Activated CD4-positive, alpha-beta memory T cell treated with anti-CD3 and anti-CD28 coated beads for 36 hours (primary cell): ENCODE measurements at regions of chr5 and their contacts with region 1.

Region 1: GRCh38 chr5:79560771-79561524 is 47.0 kb upstream of the HOMER1 start:
- DNase-seq: peak; percentile 51
- H3K4me3 Mint-ChIP-seq: peak overlapping the region; percentile 30
- H3K27ac Mint-ChIP-seq: peak overlapping the region; percentile 99
- H3K4me1 Mint-ChIP-seq: peaks cover 42% of the 10 kb centered on the region
- H3K27me3 Mint-ChIP-seq: peaks cover 1% of the 10 kb centered on the region

Region 2: DNA sequence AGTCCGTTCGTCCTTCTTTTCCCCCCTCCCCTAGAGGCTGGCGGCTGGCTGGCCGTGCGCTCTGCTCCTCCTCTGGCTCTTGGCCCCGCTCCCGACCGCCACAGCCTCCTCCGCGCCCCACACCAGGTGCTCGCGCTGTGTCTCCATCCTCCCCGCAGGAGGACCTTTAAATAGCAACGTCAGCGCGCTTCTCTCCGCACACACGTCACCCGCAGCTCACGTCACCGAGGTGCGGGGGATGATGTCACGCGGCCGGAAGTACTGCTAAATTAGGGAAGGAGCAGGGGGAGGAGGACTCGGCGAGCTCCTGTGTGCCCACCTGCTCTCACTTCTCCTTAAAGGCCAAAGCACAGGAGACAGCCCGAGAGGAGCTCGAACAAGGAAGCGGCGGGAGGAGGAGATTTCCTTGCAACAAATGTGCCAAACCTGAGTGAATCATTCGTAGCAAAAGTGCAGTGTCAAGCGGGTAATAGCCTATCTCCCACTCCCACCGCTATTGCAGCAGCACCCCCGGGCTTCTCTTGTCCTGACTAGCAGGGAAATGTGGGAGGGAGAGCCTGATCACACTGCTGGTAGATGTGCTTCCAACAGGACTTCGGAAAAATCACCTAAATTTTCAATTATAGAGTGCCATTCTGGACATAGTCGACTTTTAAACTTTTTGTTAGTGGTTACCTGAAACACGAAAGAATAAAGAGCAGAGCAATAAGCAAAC is 46.4 kb before region 1 on chr5:
- CTCF ChIA-PET with region 1: no interaction called
- POLR2A ChIA-PET with region 1: interaction called, 3 read pairs
- intact Hi-C with region 1: loop called (anchors 1 kb)
- DNase-seq: peak; percentile 93
- H3K4me3 Mint-ChIP-seq: peak overlapping the region; percentile 92
- H3K27ac Mint-ChIP-seq: peak overlapping the region; percentile 91
- H3K4me1 Mint-ChIP-seq: peaks cover 28% of the 10 kb centered on the region
- H3K27me3 Mint-ChIP-seq: peaks cover 24% of the 10 kb centered on the region

Region 3: GRCh38 chr5:79684782-79685181 is 123.8 kb after region 1 on chr5:
- CTCF ChIA-PET with region 1: no interaction called
- POLR2A ChIA-PET with region 1: no interaction called
- intact Hi-C with region 1: loop called (anchors 5 kb)
- DNase-seq: no peak
- H3K4me3 Mint-ChIP-seq: no peak overlapping the region
- H3K27ac Mint-ChIP-seq: no peak overlapping the region
- H3K4me1 Mint-ChIP-seq: peaks cover 24% of the 10 kb centered on the region
- H3K27me3 Mint-ChIP-seq: no peaks in the 10 kb centered on the region

Region 4: GRCh38 chr5:79845448-79846197 is 284.7 kb after region 1 on chr5:
- CTCF ChIA-PET with region 1: no interaction called
- POLR2A ChIA-PET with region 1: no interaction called
- intact Hi-C with region 1: loop called (anchors 2 kb)
- DNase-seq: peak; percentile 62
- H3K4me3 Mint-ChIP-seq: no peak overlapping the region
- H3K27ac Mint-ChIP-seq: peak overlapping the region; percentile 53
- H3K4me1 Mint-ChIP-seq: peaks cover 14% of the 10 kb centered on the region
- H3K27me3 Mint-ChIP-seq: peaks cover 14% of the 10 kb centered on the region

Region 5: GRCh38 chr5:80034962-80035821 is 474.2 kb after region 1 on chr5 and contains the start of gene THBS4:
- CTCF ChIA-PET with region 1: no interaction called
- POLR2A ChIA-PET with region 1: no interaction called
- intact Hi-C with region 1: loop called (anchors 5 kb)
- DNase-seq: no peak
- H3K4me3 Mint-ChIP-seq: peak within 1 kb of the TSS; percentile 38
- H3K27ac Mint-ChIP-seq: no peak within 1 kb of the TSS
- H3K4me1 Mint-ChIP-seq: peaks cover 37% of the 10 kb centered on the region
- H3K27me3 Mint-ChIP-seq: peaks cover 45% of the 10 kb centered on the region
- total RNA-seq, gene THBS4: 1.8 to 2.2 TPM